Tibial artery (tissue), 4 donors: ENCODE measurements at regions of chr11 and their contacts with region 1.

Region 1: GRCh38 chr11:74720596-74721478 is 10.4 kb downstream of the CHRDL2 start:
- DNase-seq: peak; percentile 71 to 82
- H3K4me3 ChIP-seq: no peak overlapping the region
- H3K27ac ChIP-seq: peak overlapping the region; percentile 62 to 83
- H3K4me1 ChIP-seq: peaks cover 0 to 35% (median 29%) of the 10 kb centered on the region in 4 donors
- H3K27me3 ChIP-seq: no peaks in the 10 kb centered on the region
- CTCF ChIP-seq: no peak

Region 2: GRCh38 chr11:74634537-74634936 is 86.3 kb before region 1 on chr11:
- intact Hi-C with region 1: loop called (anchors 5 kb)
- DNase-seq: no peak
- H3K4me3 ChIP-seq: no peak overlapping the region
- H3K27ac ChIP-seq: no peak overlapping the region
- H3K4me1 ChIP-seq: peaks cover 0 to 33% (median 13%) of the 10 kb centered on the region in 4 donors
- H3K27me3 ChIP-seq: no peaks in the 10 kb centered on the region
- CTCF ChIP-seq: peak in 1 of 2 experiments; percentile 33

Region 3: GRCh38 chr11:74948898-74949747 is 228.3 kb after region 1 on chr11 and contains the starts of genes SPCS2 and XRRA1:
- intact Hi-C with region 1: no loop called
- DNase-seq: peak; percentile 99
- H3K4me3 ChIP-seq: peak within 1 kb of the TSS; percentile 66 to 93
- H3K27ac ChIP-seq: peak within 1 kb of the TSS; percentile 82 to 83
- H3K4me1 ChIP-seq: peaks cover 0 to 40% (median 19%) of the 10 kb centered on the region in 4 donors
- H3K27me3 ChIP-seq: no peaks in the 10 kb centered on the region
- CTCF ChIP-seq: no peak